ENCODE measurements at regions of chr2 and their contacts with region 1.

Region 1: DNA sequence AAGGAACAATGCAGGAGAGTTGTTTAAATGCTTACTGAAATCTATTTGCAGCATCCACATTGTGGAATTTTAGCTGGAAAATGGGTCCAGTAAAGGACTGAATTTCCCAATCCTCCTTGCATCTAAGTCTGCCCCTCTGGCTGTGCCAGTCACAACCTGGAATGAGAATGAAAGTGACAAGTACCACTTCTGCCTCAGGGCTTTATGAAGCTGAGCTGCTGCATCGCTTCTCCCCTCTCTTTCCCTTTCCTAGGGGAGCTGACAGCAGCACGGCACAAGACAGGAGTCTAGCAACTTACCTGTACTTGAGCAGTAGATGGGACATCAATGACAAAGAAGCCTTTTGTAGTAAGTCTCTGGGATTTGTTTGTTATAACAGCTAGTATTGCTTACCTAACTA is 27.3 kb upstream of the THSD7B start:
- DNase-seq: no peak

Region 2: GRCh38 chr2:135904341-135904989 is 833.6 kb before region 1 on chr2:
- intact Hi-C with region 1: loop called in 1 of 2 experiments (anchors 10 kb)
- DNase-seq: no peak

Measured in posterior vena cava (tissue), 2 donors.